ENCODE measurements at regions of chr10 and their contacts with region 1.

Region 1: DNA sequence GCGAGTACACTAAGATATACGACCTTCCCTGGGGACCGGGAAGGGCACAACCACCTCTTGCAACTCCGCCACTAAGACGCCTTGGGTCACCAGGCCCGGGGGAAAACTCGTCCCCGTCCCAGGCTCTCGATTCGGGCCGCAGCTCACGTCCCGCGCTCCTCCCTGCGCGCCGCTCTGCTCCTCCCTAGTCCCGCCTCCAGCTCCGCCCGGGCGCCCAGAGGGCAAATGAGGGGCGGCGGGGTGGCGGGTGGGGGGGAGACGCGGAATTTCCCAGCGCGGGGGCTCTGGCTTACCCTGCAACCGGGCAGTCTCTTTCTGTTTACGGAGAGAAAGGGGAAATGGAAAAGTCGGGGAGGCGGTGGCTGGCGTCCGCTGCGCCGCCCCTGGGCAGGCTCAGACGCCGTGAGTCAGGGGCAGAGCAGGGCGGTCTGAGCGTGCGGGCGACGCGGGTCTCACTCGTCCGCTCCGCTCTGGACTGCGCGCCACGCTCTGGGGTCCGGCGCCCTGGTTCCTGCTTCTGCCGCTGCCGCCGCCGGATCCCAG is at the start of gene MAP3K8:
- DNase-seq: peak; percentile 86
- H3K4me3 Mint-ChIP-seq: peak within 1 kb of the TSS; percentile 82
- H3K27ac Mint-ChIP-seq: peak within 1 kb of the TSS; percentile 75
- H3K4me1 Mint-ChIP-seq: peaks cover 35% of the 10 kb centered on the region
- H3K27me3 Mint-ChIP-seq: no peaks in the 10 kb centered on the region
- CTCF ChIP-seq: no peak
- total RNA-seq, gene MAP3K8: 1.5 and 2.2 TPM in 2 replicates

Region 2: GRCh38 chr10:29795850-29796249 is 638.0 kb before region 1 on chr10:
- CTCF ChIA-PET with region 1: no interaction called
- POLR2A ChIA-PET with region 1: no interaction called
- intact Hi-C with region 1: no loop called
- DNase-seq: no peak
- H3K4me3 Mint-ChIP-seq: no peak overlapping the region
- H3K27ac Mint-ChIP-seq: no peak overlapping the region
- H3K4me1 Mint-ChIP-seq: peaks cover 5% of the 10 kb centered on the region
- H3K27me3 Mint-ChIP-seq: no peaks in the 10 kb centered on the region
- CTCF ChIP-seq: no peak

Region 3: DNA sequence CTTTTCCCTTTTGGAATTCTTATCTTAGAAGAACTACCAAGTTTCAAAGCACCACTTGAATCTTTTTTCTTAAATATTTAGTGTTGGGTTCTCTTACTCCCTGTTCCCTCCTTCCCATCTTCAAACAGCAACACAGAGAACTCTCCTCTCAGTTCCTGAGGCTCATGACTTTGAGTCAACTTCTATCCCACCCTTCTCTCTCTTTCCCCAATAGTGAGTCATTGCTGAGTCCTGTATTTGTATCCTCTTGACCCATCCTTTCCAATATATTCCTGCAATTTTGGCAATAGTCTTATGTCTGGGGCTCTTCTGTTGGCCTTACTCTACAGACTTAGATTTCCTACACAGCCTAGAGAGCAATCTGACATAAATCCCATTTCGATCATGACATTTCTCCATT is 353.6 kb before region 1 on chr10:
- CTCF ChIA-PET with region 1: no interaction called
- POLR2A ChIA-PET with region 1: no interaction called
- intact Hi-C with region 1: no loop called
- DNase-seq: no peak
- H3K4me3 Mint-ChIP-seq: no peak overlapping the region
- H3K27ac Mint-ChIP-seq: no peak overlapping the region
- H3K4me1 Mint-ChIP-seq: peaks cover 6% of the 10 kb centered on the region
- H3K27me3 Mint-ChIP-seq: peaks cover 25% of the 10 kb centered on the region
- CTCF ChIP-seq: no peak

Region 4: GRCh38 chr10:30422981-30423654 is 10.7 kb before region 1 on chr10:
- CTCF ChIA-PET with region 1: interaction called, 4 read pairs
- POLR2A ChIA-PET with region 1: interaction called, 12 read pairs
- intact Hi-C with region 1: no loop called
- DNase-seq: peak; percentile 76
- H3K4me3 Mint-ChIP-seq: no peak overlapping the region
- H3K27ac Mint-ChIP-seq: peak overlapping the region; percentile 88
- H3K4me1 Mint-ChIP-seq: peaks cover 15% of the 10 kb centered on the region
- H3K27me3 Mint-ChIP-seq: no peaks in the 10 kb centered on the region
- CTCF ChIP-seq: no peak

Region 5: DNA sequence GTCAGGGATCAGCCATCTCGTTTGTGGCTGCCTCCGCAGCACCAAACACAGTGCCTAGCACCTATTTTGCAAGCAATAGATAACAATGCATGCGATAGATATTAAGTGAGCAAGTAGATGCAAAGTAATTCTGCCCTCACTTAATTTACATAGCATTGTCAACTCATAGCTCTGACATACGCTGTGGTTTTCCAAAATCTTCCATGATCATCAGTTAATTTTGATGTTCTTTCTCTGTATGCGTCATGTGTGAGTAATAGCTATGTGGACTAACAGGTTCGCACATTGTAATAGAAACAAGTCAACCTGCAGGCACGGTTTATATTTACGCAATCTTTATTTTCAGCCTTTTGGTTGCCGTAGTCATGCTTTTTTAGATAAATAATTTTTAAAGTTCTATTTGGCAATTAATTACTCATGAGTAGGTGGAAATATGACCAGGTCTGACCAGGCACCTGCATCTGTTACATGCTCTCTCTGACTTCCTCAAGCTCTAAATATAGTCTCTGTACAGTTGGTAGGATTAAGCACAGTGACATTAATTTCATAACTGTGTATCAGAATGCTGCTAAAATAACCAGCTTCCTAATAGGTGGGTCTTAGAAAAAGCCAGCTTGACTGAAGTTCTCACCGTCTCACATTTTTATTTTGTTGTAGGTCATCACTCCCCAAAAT is 13.5 kb after region 1 on chr10:
- CTCF ChIA-PET with region 1: interaction called, 4 read pairs
- POLR2A ChIA-PET with region 1: interaction called, 95 read pairs
- intact Hi-C with region 1: no loop called
- DNase-seq: peak; percentile 94
- H3K4me3 Mint-ChIP-seq: peak overlapping the region; percentile 44
- H3K27ac Mint-ChIP-seq: peak overlapping the region; percentile 91
- H3K4me1 Mint-ChIP-seq: peaks cover 20% of the 10 kb centered on the region
- H3K27me3 Mint-ChIP-seq: no peaks in the 10 kb centered on the region
- CTCF ChIP-seq: no peak

Region 6: DNA sequence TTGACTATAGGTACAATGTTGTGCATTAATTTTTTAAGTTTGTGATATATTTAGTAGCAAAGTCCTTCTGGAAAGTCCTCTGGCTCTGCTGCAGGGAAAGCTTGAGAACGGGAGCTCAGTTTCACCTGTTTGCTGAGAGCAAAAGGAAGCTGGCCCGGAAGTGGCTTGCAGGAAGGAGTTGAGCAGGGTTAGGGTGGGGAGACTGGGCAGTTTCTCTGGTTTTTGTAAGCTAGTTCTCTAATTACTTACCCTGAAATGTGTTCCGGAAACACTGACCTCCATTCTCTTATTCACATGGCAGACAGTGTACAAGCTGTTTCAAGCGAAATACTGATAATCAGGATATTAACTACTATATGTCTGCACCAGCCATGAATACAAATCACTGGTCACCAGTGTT is 22.5 kb after region 1 on chr10:
- CTCF ChIA-PET with region 1: no interaction called
- POLR2A ChIA-PET with region 1: interaction called, 12 read pairs
- intact Hi-C with region 1: no loop called
- DNase-seq: no peak
- H3K4me3 Mint-ChIP-seq: no peak overlapping the region
- H3K27ac Mint-ChIP-seq: peak overlapping the region; percentile 77
- H3K4me1 Mint-ChIP-seq: peaks cover 24% of the 10 kb centered on the region
- H3K27me3 Mint-ChIP-seq: no peaks in the 10 kb centered on the region
- CTCF ChIP-seq: no peak

Region 7: DNA sequence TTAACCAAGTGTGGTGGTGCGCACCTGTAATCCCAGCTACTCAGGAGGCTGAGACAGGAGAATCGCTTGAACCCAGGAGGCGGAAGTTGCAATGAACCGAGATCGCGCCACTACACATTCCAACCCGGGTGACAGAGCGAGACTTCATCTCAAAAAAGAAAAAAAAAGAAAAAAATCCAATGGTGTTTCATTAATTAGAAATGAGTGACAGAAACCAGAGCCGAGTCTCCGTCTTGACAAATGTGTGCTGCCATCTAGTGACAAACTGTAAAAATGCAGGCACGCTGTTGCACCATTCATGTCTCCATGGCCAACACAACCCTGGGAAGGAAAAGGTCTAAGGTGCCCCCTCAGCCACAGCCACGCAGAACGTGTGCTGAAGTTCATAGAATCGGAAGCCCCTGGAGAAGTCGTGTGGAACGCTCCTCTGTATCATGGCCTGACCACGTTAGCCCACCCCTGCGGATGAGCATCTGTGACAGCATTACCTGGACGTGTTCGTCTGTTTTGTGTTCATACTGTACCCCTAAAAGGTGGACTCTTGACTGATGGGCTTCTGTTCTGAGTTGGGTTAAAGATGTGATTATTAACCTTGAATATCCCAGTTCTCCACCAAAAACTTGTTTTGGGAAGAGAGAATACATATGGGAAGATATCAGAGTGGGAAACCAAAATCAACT is 100.8 kb after region 1 on chr10:
- CTCF ChIA-PET with region 1: interaction called, 3 read pairs
- POLR2A ChIA-PET with region 1: interaction called, 4 read pairs
- intact Hi-C with region 1: loop called (anchors 5 kb)
- DNase-seq: peak; percentile 77
- H3K4me3 Mint-ChIP-seq: no peak overlapping the region
- H3K27ac Mint-ChIP-seq: no peak overlapping the region
- H3K4me1 Mint-ChIP-seq: peaks cover 6% of the 10 kb centered on the region
- H3K27me3 Mint-ChIP-seq: no peaks in the 10 kb centered on the region
- CTCF ChIP-seq: peak; percentile 79